ENCODE measurements at regions of chr7 and their contacts with region 1.

Region 1: GRCh38 chr7:974820-975681 is at the start of gene COX19:
- DNase-seq: peak; percentile 96
- ATAC-seq: peak; percentile 93
- H3K4me3 Mint-ChIP-seq: peak within 1 kb of the TSS; percentile 94
- H3K27ac Mint-ChIP-seq: peak within 1 kb of the TSS; percentile 94
- H3K4me1 Mint-ChIP-seq: peaks cover 30% of the 10 kb centered on the region
- H3K27me3 Mint-ChIP-seq: no peaks in the 10 kb centered on the region
- total RNA-seq, gene COX19: 11.3 to 14.6 TPM

Region 2: GRCh38 chr7:726084-726853 is 248.8 kb before region 1 on chr7 and contains the start of gene DNAAF5:
- CTCF ChIA-PET with region 1: no interaction called
- POLR2A ChIA-PET with region 1: interaction called, 4 read pairs
- intact Hi-C with region 1: loop called in 1 of 2 experiments (anchors 1 kb)
- DNase-seq: peak; percentile 93
- ATAC-seq: peak; percentile 89
- H3K4me3 Mint-ChIP-seq: peak within 1 kb of the TSS; percentile 83
- H3K27ac Mint-ChIP-seq: peak within 1 kb of the TSS; percentile 90
- H3K4me1 Mint-ChIP-seq: peaks cover 26% of the 10 kb centered on the region
- H3K27me3 Mint-ChIP-seq: no peaks in the 10 kb centered on the region
- total RNA-seq, gene DNAAF5: 31.5 to 37.2 TPM

Region 3: GRCh38 chr7:909358-910329 is 65.4 kb before region 1 on chr7:
- CTCF ChIA-PET with region 1: interaction called, 10 read pairs
- POLR2A ChIA-PET with region 1: interaction called, 3 read pairs
- intact Hi-C with region 1: loop called (anchors 1 to 5 kb)
- DNase-seq: peak; percentile 37
- ATAC-seq: peak; percentile 28
- H3K4me3 Mint-ChIP-seq: peak overlapping the region; percentile 30
- H3K27ac Mint-ChIP-seq: no peak overlapping the region
- H3K4me1 Mint-ChIP-seq: peaks cover 10% of the 10 kb centered on the region
- H3K27me3 Mint-ChIP-seq: no peaks in the 10 kb centered on the region

Region 4: GRCh38 chr7:1028031-1028770 is 53.1 kb after region 1 on chr7:
- CTCF ChIA-PET with region 1: no interaction called
- POLR2A ChIA-PET with region 1: no interaction called
- intact Hi-C with region 1: loop called in 1 of 2 experiments (anchors 1 kb)
- DNase-seq: peak; percentile 95
- ATAC-seq: peak; percentile 87
- H3K4me3 Mint-ChIP-seq: peak overlapping the region; percentile 69
- H3K27ac Mint-ChIP-seq: peak overlapping the region; percentile 75
- H3K4me1 Mint-ChIP-seq: peaks cover 28% of the 10 kb centered on the region
- H3K27me3 Mint-ChIP-seq: no peaks in the 10 kb centered on the region

Region 5: GRCh38 chr7:1169409-1170368 is 194.6 kb after region 1 on chr7:
- CTCF ChIA-PET with region 1: no interaction called
- POLR2A ChIA-PET with region 1: no interaction called
- intact Hi-C with region 1: loop called in 1 of 2 experiments (anchors 1 kb)
- DNase-seq: peak; percentile 98
- ATAC-seq: peak; percentile 99
- H3K4me3 Mint-ChIP-seq: peak overlapping the region; percentile 71
- H3K27ac Mint-ChIP-seq: peak overlapping the region; percentile 94
- H3K4me1 Mint-ChIP-seq: peaks cover 12% of the 10 kb centered on the region
- H3K27me3 Mint-ChIP-seq: no peaks in the 10 kb centered on the region

Region 6: GRCh38 chr7:1459522-1459892 is 484.5 kb after region 1 on chr7:
- CTCF ChIA-PET with region 1: no interaction called
- POLR2A ChIA-PET with region 1: no interaction called
- intact Hi-C with region 1: loop called in 1 of 2 experiments (anchors 1 kb)
- DNase-seq: peak; percentile 100
- ATAC-seq: peak; percentile 98
- H3K4me3 Mint-ChIP-seq: peak overlapping the region; percentile 59
- H3K27ac Mint-ChIP-seq: no peak overlapping the region
- H3K4me1 Mint-ChIP-seq: peaks cover 7% of the 10 kb centered on the region
- H3K27me3 Mint-ChIP-seq: no peaks in the 10 kb centered on the region

Measured in activated CD4-positive, alpha-beta T cell treated with anti-CD3 and anti-CD28 coated beads for 36 hours (primary cell).